ENCODE measurements at regions of chr10 and their contacts with region 1.

Region 1: GRCh38 chr10:77179015-77179695 is 458.5 kb downstream of the KCNMA1 start:
- DNase-seq: peak; percentile 34 to 68 (median 46)
- ATAC-seq: peak; percentile 27
- H3K4me3 ChIP-seq: no peak overlapping the region
- H3K27ac ChIP-seq: no peak overlapping the region
- H3K4me1 ChIP-seq: peaks cover 5% of the 10 kb centered on the region
- H3K27me3 ChIP-seq: no peaks in the 10 kb centered on the region
- CTCF ChIP-seq: no peak
- POLR2A ChIP-seq: no peak

Region 2: GRCh38 chr10:77649333-77650331 is 470.5 kb after region 1 on chr10:
- intact Hi-C with region 1: loop called (anchors 5 kb)
- DNase-seq: no peak
- ATAC-seq: no peak
- H3K4me3 ChIP-seq: no peak overlapping the region
- H3K27ac ChIP-seq: no peak overlapping the region
- H3K4me1 ChIP-seq: no peaks in the 10 kb centered on the region
- H3K27me3 ChIP-seq: no peaks in the 10 kb centered on the region
- CTCF ChIP-seq: no peak
- POLR2A ChIP-seq: no peak